Activated B cell treated with CpG ODN at 0.5 μM for 24 hours (primary cell): ENCODE measurements at regions of chr18 and their contacts with region 1.

Region 1: GRCh38 chr18:39500306-39500705 is 1934.7 kb upstream of the CELF4 start:
- DNase-seq: no peak
- ATAC-seq: no peak
- H3K4me3 Mint-ChIP-seq: no peak overlapping the region
- H3K27ac Mint-ChIP-seq: no peak overlapping the region
- H3K4me1 Mint-ChIP-seq: no peaks in the 10 kb centered on the region
- H3K27me3 Mint-ChIP-seq: no peaks in the 10 kb centered on the region
- CTCF ChIP-seq: no peak

Region 2: GRCh38 chr18:39198376-39198775 is 301.9 kb before region 1 on chr18:
- CTCF ChIA-PET with region 1: no interaction called
- POLR2A ChIA-PET with region 1: no interaction called
- intact Hi-C with region 1: no loop called
- DNase-seq: no peak
- ATAC-seq: no peak
- H3K4me3 Mint-ChIP-seq: no peak overlapping the region
- H3K27ac Mint-ChIP-seq: no peak overlapping the region
- H3K4me1 Mint-ChIP-seq: no peaks in the 10 kb centered on the region
- H3K27me3 Mint-ChIP-seq: no peaks in the 10 kb centered on the region
- CTCF ChIP-seq: no peak

Region 3: GRCh38 chr18:39403121-39403520 is 97.2 kb before region 1 on chr18:
- CTCF ChIA-PET with region 1: no interaction called
- POLR2A ChIA-PET with region 1: no interaction called
- intact Hi-C with region 1: loop called (anchors 1 kb)
- DNase-seq: no peak
- ATAC-seq: no peak
- H3K4me3 Mint-ChIP-seq: no peak overlapping the region
- H3K27ac Mint-ChIP-seq: no peak overlapping the region
- H3K4me1 Mint-ChIP-seq: no peaks in the 10 kb centered on the region
- H3K27me3 Mint-ChIP-seq: no peaks in the 10 kb centered on the region
- CTCF ChIP-seq: no peak

Region 4: GRCh38 chr18:39441648-39442047 is 58.7 kb before region 1 on chr18:
- CTCF ChIA-PET with region 1: no interaction called
- POLR2A ChIA-PET with region 1: no interaction called
- intact Hi-C with region 1: no loop called
- DNase-seq: no peak
- ATAC-seq: no peak
- H3K4me3 Mint-ChIP-seq: no peak overlapping the region
- H3K27ac Mint-ChIP-seq: no peak overlapping the region
- H3K4me1 Mint-ChIP-seq: no peaks in the 10 kb centered on the region
- H3K27me3 Mint-ChIP-seq: no peaks in the 10 kb centered on the region
- CTCF ChIP-seq: no peak